Vagina (tissue), 2 donors: ENCODE measurements at regions of chr3 and their contacts with region 1.

Region 1: GRCh38 chr3:108552267-108553159 is 36.7 kb downstream of the CIP2A start:
- DNase-seq: no peak
- H3K4me3 ChIP-seq: no peak overlapping the region
- H3K27ac ChIP-seq: no peak overlapping the region
- H3K4me1 ChIP-seq: no peaks in the 10 kb centered on the region
- H3K27me3 ChIP-seq: no peaks in the 10 kb centered on the region
- CTCF ChIP-seq: peak in 2 of 3 experiments; percentile 52 to 62
- POLR2A ChIP-seq: no peak

Region 2: GRCh38 chr3:108477511-108478147 is 74.9 kb before region 1 on chr3:
- intact Hi-C with region 1: no loop called
- DNase-seq: no peak
- H3K4me3 ChIP-seq: no peak overlapping the region
- H3K27ac ChIP-seq: no peak overlapping the region
- H3K4me1 ChIP-seq: no peaks in the 10 kb centered on the region
- H3K27me3 ChIP-seq: no peaks in the 10 kb centered on the region
- CTCF ChIP-seq: peak; percentile 28 to 81 (median 55)
- POLR2A ChIP-seq: no peak

Region 3: DNA sequence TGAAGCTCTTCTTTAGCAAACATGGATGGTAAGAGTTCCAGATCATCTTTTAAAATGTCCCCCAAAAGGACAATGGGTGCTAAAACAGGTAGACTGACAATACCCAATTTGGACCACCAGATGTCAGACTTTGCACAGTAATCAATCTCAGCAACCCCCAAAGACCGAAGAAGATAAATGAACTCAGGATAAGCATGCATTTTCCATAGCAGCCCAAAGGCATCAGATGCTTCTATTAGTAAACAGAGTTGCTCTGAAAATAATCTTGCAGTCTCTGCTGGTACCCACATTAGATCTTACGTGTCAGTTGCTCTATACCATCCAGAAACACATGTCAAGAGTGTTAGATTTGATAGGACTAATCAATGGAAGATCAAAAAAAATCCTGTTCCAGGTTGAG is 62.7 kb before region 1 on chr3:
- intact Hi-C with region 1: loop called (anchors 5 kb)
- DNase-seq: no peak
- H3K4me3 ChIP-seq: no peak overlapping the region
- H3K27ac ChIP-seq: no peak overlapping the region
- H3K4me1 ChIP-seq: peaks cover 8% of the 10 kb centered on the region
- H3K27me3 ChIP-seq: no peaks in the 10 kb centered on the region
- CTCF ChIP-seq: peak; percentile 53 to 73 (median 72)
- POLR2A ChIP-seq: no peak